AG04450 (cell line): ENCODE measurements at regions of chr14 and their contacts with region 1.

Region 1: DNA sequence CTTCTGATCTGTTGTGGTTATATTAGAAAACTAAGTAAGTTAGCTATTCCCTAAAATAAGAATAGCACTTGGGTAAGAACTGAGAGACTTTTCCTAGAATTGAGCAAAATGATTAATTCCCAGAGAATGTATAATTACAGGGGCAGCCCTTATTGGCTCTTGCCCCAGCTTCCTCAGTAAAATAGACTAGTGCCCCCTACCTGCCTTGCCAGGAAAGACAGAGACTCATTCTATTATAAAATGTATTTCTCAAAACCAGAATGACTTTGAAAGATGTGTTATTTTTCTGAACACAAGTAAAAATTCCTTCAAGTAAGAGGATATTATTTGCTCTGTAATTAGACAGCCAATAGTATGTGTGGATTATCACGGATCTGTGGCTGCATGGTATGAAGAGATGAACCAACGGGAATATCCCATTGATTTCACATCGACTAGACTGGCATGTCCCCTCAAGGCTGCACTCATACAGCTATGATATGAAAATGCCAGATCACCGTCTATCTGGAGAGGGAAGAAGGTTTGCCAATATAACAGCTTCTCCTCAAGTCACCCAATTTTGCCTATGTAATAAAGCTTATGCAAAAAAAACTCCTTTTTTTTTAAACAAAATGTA is 7.4 kb upstream of the GLRX5 start:
- DNase-seq: no peak
- H3K4me3 ChIP-seq: 0 out of 2 replicates have a peak overlapping the region, but pooled peaks have one; percentile 17
- H3K27ac ChIP-seq: no peak overlapping the region
- H3K27me3 ChIP-seq: no peaks in the 10 kb centered on the region
- CTCF ChIP-seq: peak; percentile 77

Region 2: DNA sequence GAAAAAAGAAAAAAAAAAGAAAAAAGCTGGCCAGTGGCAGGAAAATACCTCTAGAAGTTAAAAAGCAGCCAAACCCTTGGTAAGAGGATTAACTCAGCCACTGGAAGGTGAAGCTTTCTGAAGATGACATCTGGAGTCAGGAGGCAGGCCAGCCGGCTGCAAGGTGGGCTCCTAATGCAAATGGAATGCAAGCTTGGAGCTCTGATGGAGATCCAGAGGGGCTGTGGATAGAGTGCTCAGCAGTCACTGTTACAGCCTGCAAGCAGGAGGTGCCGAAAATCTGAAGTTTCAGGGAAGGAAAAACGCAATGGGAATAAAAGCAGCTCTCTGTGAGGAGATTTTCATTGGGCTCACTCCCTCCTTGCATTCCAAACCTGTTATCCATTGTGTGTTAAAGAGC is 798.5 kb before region 1 on chr14:
- CTCF ChIA-PET with region 1: no interaction called
- POLR2A ChIA-PET with region 1: no interaction called
- DNase-seq: no peak
- H3K4me3 ChIP-seq: no peak overlapping the region
- H3K27ac ChIP-seq: no peak overlapping the region
- H3K27me3 ChIP-seq: peaks cover 3% of the 10 kb centered on the region
- CTCF ChIP-seq: no peak

Region 3: GRCh38 chr14:95442633-95443021 is 84.9 kb before region 1 on chr14:
- CTCF ChIA-PET with region 1: interaction called, 145 read pairs
- POLR2A ChIA-PET with region 1: interaction called, 7 read pairs
- DNase-seq: peak; percentile 57
- H3K4me3 ChIP-seq: no peak overlapping the region
- H3K27ac ChIP-seq: no peak overlapping the region
- H3K27me3 ChIP-seq: no peaks in the 10 kb centered on the region
- CTCF ChIP-seq: peak; percentile 95

Region 4: GRCh38 chr14:95460647-95461478 is 66.6 kb before region 1 on chr14:
- CTCF ChIA-PET with region 1: interaction called, 15 read pairs
- POLR2A ChIA-PET with region 1: interaction called, 3 read pairs
- DNase-seq: peak; percentile 55
- H3K4me3 ChIP-seq: no peak overlapping the region
- H3K27ac ChIP-seq: no peak overlapping the region
- H3K27me3 ChIP-seq: no peaks in the 10 kb centered on the region
- CTCF ChIP-seq: no peak

Region 5: DNA sequence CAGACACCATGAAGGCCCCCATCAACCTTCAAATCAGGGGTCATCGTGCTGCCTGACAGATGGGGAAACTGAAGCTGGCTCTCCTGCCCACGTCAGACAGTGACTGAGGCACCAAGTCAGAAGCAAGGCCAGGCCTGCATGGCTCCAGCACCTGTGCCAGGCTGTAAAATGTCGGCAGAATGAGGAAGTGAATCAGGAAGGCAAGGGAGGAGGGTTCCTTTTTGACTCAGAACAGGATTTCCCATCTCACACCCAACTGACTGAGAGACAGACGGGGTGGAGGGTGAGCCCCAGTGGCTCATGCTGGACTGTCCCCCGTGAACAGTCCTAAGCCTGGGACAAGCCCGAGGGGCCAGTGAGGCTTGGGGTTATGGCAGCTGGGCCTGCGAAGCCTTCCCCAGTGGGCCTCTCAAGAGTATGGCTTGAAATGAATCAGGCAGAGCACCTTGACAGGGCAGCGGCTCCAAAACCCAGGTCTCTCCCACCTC is 31.9 kb before region 1 on chr14:
- CTCF ChIA-PET with region 1: interaction called, 43 read pairs
- POLR2A ChIA-PET with region 1: interaction called, 4 read pairs
- DNase-seq: no peak
- H3K4me3 ChIP-seq: no peak overlapping the region
- H3K27ac ChIP-seq: no peak overlapping the region
- H3K27me3 ChIP-seq: no peaks in the 10 kb centered on the region
- CTCF ChIP-seq: no peak

Region 6: GRCh38 chr14:95507701-95508103 is 19.8 kb before region 1 on chr14:
- CTCF ChIA-PET with region 1: interaction called, 17 read pairs
- POLR2A ChIA-PET with region 1: no interaction called
- DNase-seq: no peak
- H3K4me3 ChIP-seq: no peak overlapping the region
- H3K27ac ChIP-seq: peak overlapping the region; percentile 77
- H3K27me3 ChIP-seq: no peaks in the 10 kb centered on the region
- CTCF ChIP-seq: no peak

Region 7: GRCh38 chr14:95545179-95546168 is 18.0 kb after region 1 on chr14:
- CTCF ChIA-PET with region 1: interaction called, 10 read pairs
- POLR2A ChIA-PET with region 1: interaction called, 6 read pairs
- DNase-seq: peak; percentile 71
- H3K4me3 ChIP-seq: no peak overlapping the region
- H3K27ac ChIP-seq: peak overlapping the region; percentile 69
- H3K27me3 ChIP-seq: no peaks in the 10 kb centered on the region
- CTCF ChIP-seq: no peak

Region 8: GRCh38 chr14:95577067-95577800 is 49.7 kb after region 1 on chr14:
- CTCF ChIA-PET with region 1: no interaction called
- POLR2A ChIA-PET with region 1: no interaction called
- DNase-seq: no peak
- H3K4me3 ChIP-seq: no peak overlapping the region
- H3K27ac ChIP-seq: no peak overlapping the region
- H3K27me3 ChIP-seq: peaks cover 2% of the 10 kb centered on the region
- CTCF ChIP-seq: no peak